Activated T-helper 1 cell treated with anti-CD3 and anti-CD28 coated beads, Interleukin-12 subunit alpha, Interleukin-12 subunit beta, Interleukin-2, Interleukin-4 antibody, amounts not matched to agents 30 ng/mL and 10 ng/mL and 1 ng/mL, durations not matched to agents 14 hours and 24 hours and 36 hours (primary cell): ENCODE measurements at regions of chr15 and their contacts with region 1.

Region 1: DNA sequence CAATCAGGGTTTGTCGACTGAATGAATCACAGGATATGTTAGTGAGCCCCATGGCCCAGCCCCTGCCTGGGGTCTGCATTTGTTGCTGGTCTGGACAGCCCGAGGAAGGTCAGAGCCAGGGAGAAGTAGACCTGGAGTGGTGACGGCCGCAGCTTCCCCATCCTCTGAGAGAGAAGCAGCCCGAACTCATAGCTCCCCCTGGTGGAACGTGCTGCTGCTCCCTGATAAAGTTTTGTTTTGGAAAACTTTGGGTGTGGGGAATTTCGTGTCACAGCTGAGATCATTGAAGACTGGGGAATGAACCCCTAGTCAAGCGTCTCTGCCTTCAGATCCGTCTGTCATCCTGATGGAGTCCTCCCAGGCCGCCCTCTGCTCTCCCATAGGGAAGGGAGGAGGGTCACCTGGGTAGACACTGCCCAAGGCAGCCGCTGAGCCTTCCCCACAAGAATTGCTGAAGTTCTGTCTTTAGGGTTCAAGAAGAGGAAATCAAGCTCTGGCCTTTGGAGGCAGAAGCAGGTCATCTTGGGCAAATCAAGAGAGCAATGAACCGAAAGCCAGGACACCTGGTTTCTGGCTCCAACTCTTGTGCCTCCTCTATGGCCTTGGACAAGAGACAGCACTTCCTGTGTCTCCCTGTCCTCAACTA is 60.5 kb downstream of the GLDN start:
- DNase-seq: no peak
- H3K4me3 Mint-ChIP-seq: no peak overlapping the region
- H3K27ac Mint-ChIP-seq: no peak overlapping the region
- H3K4me1 Mint-ChIP-seq: no peaks in the 10 kb centered on the region
- H3K27me3 Mint-ChIP-seq: peaks cover 15% of the 10 kb centered on the region

Region 2: GRCh38 chr15:51281368-51281967 is 120.5 kb before region 1 on chr15:
- intact Hi-C with region 1: loop called (anchors 2 kb)
- DNase-seq: no peak
- H3K4me3 Mint-ChIP-seq: no peak overlapping the region
- H3K27ac Mint-ChIP-seq: no peak overlapping the region
- H3K4me1 Mint-ChIP-seq: peaks cover 15% of the 10 kb centered on the region
- H3K27me3 Mint-ChIP-seq: peaks cover 9% of the 10 kb centered on the region

Region 3: GRCh38 chr15:51561271-51561670 is 159.3 kb after region 1 on chr15:
- intact Hi-C with region 1: no loop called
- DNase-seq: no peak
- H3K4me3 Mint-ChIP-seq: no peak overlapping the region
- H3K27ac Mint-ChIP-seq: no peak overlapping the region
- H3K4me1 Mint-ChIP-seq: no peaks in the 10 kb centered on the region
- H3K27me3 Mint-ChIP-seq: no peaks in the 10 kb centered on the region